AG04449 (cell line): ENCODE measurements at regions of chr5 and their contacts with region 1.

Region 1: GRCh38 chr5:129113871-129114270 is 19.3 kb downstream of the ISOC1 start:
- DNase-seq: no peak
- H3K4me3 ChIP-seq: no peak overlapping the region
- CTCF ChIP-seq: no peak

Region 2: DNA sequence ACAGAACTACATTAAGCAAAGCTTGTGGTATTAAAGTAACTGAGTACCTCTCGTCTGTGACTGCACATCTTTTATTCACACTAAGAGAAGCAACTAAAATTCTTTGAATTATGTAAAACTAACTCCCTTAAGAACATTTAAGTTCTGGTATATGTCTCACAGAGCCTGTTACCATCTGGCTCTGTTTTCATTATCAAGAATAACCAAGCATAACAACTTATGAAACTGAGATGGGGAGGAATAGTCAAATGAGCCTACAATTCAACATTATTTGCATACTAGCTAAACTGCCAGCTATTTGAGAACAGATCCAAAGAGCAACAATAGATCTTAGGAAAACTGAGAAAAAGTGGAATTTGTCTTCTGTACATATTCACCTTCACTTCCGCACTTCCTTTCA is 44.6 kb before region 1 on chr5:
- CTCF ChIA-PET with region 1: no interaction called
- POLR2A ChIA-PET with region 1: no interaction called
- DNase-seq: no peak
- H3K4me3 ChIP-seq: no peak overlapping the region
- CTCF ChIP-seq: no peak

Region 3: GRCh38 chr5:129125810-129126209 is 11.9 kb after region 1 on chr5:
- CTCF ChIA-PET with region 1: interaction called, 14 read pairs
- POLR2A ChIA-PET with region 1: no interaction called
- DNase-seq: no peak
- H3K4me3 ChIP-seq: no peak overlapping the region
- CTCF ChIP-seq: no peak